Adrenal gland (tissue), 19 donors: ENCODE measurements at regions of chr1 and their contacts with region 1.

Region 1: GRCh38 chr1:111880881-111881837 is 108.3 kb downstream of the KCND3 start:
- DNase-seq: peak in 4 of 7 donors; percentile 6 to 56 (median 20)
- H3K4me3 ChIP-seq: no peak overlapping the region
- H3K27ac ChIP-seq: no peak overlapping the region
- H3K4me1 ChIP-seq: no peaks in the 10 kb centered on the region
- H3K27me3 ChIP-seq: no peaks in the 10 kb centered on the region
- CTCF ChIP-seq: no peak
- POLR2A ChIP-seq: no peak

Region 2: DNA sequence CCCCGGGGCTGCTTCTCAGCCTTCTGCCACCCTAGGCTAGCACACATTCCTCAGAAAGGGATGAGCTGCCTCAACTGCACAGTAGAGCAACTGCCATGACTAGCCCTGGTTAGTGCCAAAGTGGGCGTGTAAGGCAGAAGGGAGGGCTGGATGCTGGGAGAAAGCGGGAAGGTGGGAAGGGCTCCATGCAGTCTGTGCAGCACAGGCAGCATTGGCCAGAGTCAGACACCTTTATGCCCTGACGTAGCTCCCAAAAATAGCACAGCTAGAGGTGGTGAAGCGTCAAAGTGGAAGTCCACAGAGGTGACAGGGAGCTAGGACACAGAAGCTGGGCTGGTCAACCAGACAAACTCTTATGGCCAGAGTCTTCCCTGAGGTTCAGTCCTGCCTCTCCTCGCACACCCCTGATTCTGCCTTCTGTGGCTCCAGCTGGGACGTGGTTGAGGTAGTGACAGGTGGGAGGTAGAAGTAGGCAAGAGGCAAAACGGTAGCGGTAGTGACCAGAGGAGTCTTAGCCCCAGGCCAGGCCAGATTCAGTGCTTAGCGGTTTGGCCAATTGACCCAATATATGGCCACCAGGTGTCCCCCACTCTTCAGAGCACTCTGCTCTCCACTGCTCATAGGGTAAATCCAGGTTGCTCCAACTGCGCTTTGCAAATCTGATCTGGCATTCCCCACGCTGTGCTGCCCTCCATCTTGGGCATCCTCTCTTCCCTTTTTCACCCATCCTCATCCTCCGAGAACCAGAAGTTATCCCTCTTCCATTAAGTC is 79.9 kb before region 1 on chr1:
- intact Hi-C with region 1: no loop called
- DNase-seq: peak in 1 of 7 donors; percentile 1
- H3K4me3 ChIP-seq: no peak overlapping the region
- H3K27ac ChIP-seq: no peak overlapping the region
- H3K4me1 ChIP-seq: no peaks in the 10 kb centered on the region
- H3K27me3 ChIP-seq: no peaks in the 10 kb centered on the region
- CTCF ChIP-seq: peak in 1 of 6 experiments; percentile 10
- POLR2A ChIP-seq: no peak

Region 3: GRCh38 chr1:111948209-111949171 is 67.3 kb after region 1 on chr1:
- intact Hi-C with region 1: loop called in 1 of 2 experiments (anchors 10 kb)
- DNase-seq: peak; percentile 23 to 65 (median 37)
- H3K4me3 ChIP-seq: no peak overlapping the region
- H3K27ac ChIP-seq: no peak overlapping the region
- H3K4me1 ChIP-seq: no peaks in the 10 kb centered on the region
- H3K27me3 ChIP-seq: no peaks in the 10 kb centered on the region
- CTCF ChIP-seq: no peak
- POLR2A ChIP-seq: no peak